GM10248 (cell line): ENCODE measurements at regions of chr7 and their contacts with region 1.

Region 1: GRCh38 chr7:70829221-70830059 is 302.5 kb upstream of the GALNT17 start:
- DNase-seq: peak; percentile 68
- CTCF ChIP-seq: peak; percentile 75

Region 2: DNA sequence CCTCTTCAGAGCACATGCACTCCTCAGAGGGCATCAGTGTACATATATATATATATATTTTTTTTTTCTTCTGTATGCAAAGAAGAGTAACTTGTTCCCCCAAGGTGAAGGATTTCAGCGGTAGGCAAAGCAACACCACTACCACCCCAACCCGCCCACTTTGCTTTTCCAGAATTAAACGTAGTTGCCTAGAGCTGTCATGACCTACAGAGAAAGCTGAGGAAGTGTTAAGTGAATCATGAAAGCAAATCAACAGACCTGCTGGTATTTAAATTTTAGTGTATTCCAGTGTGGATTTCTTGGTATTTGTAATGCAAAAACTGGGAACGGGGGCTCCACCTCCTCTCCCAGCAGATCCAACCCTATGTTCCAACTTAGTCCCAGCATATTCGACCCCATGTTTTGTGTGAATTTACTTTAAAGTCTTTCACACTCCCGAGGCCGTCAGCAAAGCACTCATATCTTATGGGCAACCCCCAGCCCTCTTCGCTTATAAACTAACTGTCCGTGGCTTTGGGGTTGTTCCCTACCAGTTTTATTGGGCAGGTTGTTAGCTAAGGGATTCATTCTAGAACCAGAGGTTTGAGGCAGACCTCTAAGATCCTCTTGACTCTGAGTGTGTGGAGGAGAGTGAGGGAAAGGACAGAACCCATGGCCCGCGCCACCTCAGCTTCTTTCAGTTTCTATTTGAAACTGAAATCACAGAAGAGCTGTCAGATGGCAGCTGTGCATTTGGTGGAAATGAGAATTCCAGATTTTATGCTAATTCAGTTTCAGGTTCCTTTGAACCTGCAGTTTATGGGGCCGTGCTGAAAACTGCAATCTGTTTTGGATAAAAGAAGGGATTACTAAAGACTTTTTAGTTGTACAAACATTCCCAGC is 147.7 kb before region 1 on chr7:
- CTCF ChIA-PET with region 1: no interaction called
- POLR2A ChIA-PET with region 1: no interaction called
- DNase-seq: peak; percentile 45
- CTCF ChIP-seq: no peak

Region 3: GRCh38 chr7:70693686-70694360 is 135.6 kb before region 1 on chr7:
- CTCF ChIA-PET with region 1: no interaction called
- POLR2A ChIA-PET with region 1: no interaction called
- DNase-seq: peak; percentile 75
- CTCF ChIP-seq: no peak

Region 4: DNA sequence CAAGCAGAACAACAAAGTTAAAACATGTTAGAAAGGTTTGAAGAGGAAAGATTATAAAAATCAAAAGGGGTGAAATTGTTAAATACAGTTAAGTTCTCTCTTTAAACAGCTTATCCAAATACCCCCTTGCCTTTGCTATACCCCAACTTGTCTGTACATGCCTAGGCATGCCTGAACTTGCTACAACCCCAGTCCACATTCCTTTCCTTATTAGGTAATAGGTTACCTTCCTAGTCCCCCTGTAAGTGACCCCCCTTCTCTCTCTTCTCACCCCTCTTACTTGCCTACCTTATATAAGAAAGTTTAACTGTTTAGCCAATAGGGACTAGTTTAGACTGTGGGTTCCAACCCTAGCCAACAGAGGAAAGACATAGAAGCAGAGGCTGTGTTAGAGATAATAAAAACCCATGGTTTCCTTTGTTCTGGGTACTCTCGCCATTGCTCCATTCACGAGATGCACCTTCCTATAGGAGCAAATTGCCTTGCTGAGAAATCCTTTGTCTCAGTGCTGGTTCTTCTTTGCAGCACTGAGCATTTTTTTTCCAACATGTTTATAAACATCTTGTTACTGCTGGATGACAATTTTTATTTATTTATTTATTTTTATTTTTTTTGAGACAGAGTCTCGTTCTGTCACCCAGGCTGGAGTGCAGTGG is 20.3 kb after region 1 on chr7:
- CTCF ChIA-PET with region 1: interaction called, 23 read pairs
- POLR2A ChIA-PET with region 1: no interaction called
- DNase-seq: no peak
- CTCF ChIP-seq: no peak

Region 5: GRCh38 chr7:70856866-70857630 is 27.6 kb after region 1 on chr7:
- CTCF ChIA-PET with region 1: interaction called, 23 read pairs
- POLR2A ChIA-PET with region 1: no interaction called
- DNase-seq: peak; percentile 50
- CTCF ChIP-seq: peak; percentile 84

Region 6: GRCh38 chr7:71733107-71733870 is 903.8 kb after region 1 on chr7:
- CTCF ChIA-PET with region 1: interaction called, 47 read pairs
- POLR2A ChIA-PET with region 1: no interaction called
- DNase-seq: peak; percentile 66
- CTCF ChIP-seq: peak; percentile 91